ENCODE measurements at regions of chr9 and their contacts with region 1.

Region 1: GRCh38 chr9:2132484-2133082 is 117.4 kb downstream of the SMARCA2 start:
- DNase-seq: peak in 3 of 9 donors; percentile 12 to 19 (median 13)
- ATAC-seq: no peak
- H3K4me3 ChIP-seq: no peak overlapping the region
- H3K4me3 Mint-ChIP-seq: peak overlapping the region in 1 of 10 donors; percentile 26
- H3K27ac ChIP-seq: no peak overlapping the region
- H3K27ac Mint-ChIP-seq: peak overlapping the region in 2 of 9 donors; percentile 9 to 59
- H3K4me1 ChIP-seq: no peaks in the 10 kb centered on the region
- H3K4me1 Mint-ChIP-seq: peaks cover 8 to 64% (median 55%) of the 10 kb centered on the region in 7 donors
- H3K27me3 ChIP-seq: no peaks in the 10 kb centered on the region
- H3K27me3 Mint-ChIP-seq: no peaks in the 10 kb centered on the region

Region 2: GRCh38 chr9:1722404-1722803 is 410.2 kb before region 1 on chr9:
- CTCF ChIA-PET with region 1: no interaction called
- POLR2A ChIA-PET with region 1: no interaction called
- intact Hi-C with region 1: no loop called
- DNase-seq: no peak
- ATAC-seq: no peak
- H3K4me3 ChIP-seq: no peak overlapping the region
- H3K4me3 Mint-ChIP-seq: no peak overlapping the region
- H3K27ac ChIP-seq: no peak overlapping the region
- H3K27ac Mint-ChIP-seq: no peak overlapping the region
- H3K4me1 ChIP-seq: no peaks in the 10 kb centered on the region
- H3K4me1 Mint-ChIP-seq: no peaks in the 10 kb centered on the region
- H3K27me3 ChIP-seq: no peaks in the 10 kb centered on the region
- H3K27me3 Mint-ChIP-seq: peaks cover 0 to 33% (median 27%) of the 10 kb centered on the region in 5 donors

Region 3: DNA sequence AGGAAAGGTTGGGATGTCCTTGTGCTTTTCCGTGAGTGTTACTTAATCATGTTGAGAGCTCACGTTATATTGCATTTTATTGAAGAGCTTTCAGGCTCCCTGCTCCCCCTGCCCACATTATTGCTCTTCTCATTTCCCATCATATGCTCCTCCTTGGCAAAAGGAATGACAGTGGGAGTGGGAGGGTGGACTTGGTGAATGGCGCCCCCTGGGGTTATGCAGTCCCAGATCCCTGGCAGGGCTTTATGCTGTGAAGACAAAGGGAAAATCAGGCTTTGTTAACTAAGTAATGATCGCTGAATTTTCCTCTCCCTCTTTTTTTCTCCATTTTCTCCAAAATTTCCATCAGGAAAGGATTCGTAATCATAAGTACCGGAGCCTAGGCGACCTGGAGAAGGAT is 49.2 kb after region 1 on chr9:
- CTCF ChIA-PET with region 1: interaction called, 3 read pairs
- POLR2A ChIA-PET with region 1: interaction called, 6 read pairs
- intact Hi-C with region 1: loop called (anchors 2 kb)
- DNase-seq: no peak
- ATAC-seq: no peak
- H3K4me3 ChIP-seq: no peak overlapping the region
- H3K4me3 Mint-ChIP-seq: no peak overlapping the region
- H3K27ac ChIP-seq: no peak overlapping the region
- H3K27ac Mint-ChIP-seq: peak overlapping the region in 2 of 9 donors; percentile 14 to 22
- H3K4me1 ChIP-seq: no peaks in the 10 kb centered on the region
- H3K4me1 Mint-ChIP-seq: peaks cover 0 to 7% (median 4%) of the 10 kb centered on the region in 7 donors
- H3K27me3 ChIP-seq: no peaks in the 10 kb centered on the region
- H3K27me3 Mint-ChIP-seq: no peaks in the 10 kb centered on the region

Region 4: DNA sequence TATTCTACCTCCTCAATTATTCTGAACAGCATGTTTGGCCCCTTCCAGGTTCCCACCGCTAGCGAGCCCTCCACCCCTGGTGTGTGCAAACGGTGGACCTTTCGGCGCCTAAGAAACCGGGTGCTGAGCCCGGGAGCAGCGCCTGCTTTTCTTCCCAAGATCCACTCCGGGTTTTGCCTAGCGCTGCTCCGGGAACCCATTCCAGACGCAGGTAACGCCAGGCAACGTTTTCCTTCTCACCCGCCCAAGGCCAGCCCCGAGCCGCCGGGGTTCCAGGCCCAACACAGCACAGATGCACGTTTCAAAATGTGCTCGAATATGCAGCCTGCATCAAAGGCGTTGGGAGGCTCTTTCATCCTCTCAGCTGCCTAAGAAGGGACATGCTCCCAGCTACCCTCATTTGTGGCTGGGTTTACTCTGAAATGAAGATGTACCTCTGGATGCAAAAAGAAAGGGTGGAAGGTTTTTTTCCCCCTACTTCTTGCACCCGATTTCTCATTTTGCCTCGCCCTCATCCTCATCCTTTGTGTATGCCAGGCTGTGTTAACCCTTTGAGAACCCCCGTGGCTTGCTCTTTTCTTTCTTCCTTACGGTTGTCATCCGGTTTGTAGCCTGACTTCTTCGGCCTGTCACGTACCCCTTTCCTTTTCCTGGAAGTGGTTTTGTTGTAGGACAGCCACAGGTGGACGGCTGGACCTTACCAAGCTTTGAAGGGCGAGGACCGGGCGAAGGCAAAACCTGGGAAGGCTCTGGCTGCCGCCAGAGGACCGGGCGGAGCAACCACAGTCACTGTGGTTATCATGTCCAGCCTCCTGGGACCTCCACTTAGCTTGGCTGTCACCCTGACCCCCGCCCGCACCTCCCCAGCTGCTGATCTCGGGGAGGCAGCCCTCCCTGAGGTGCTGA is 109.5 kb after region 1 on chr9:
- CTCF ChIA-PET with region 1: no interaction called
- POLR2A ChIA-PET with region 1: no interaction called
- intact Hi-C with region 1: no loop called
- DNase-seq: peak; percentile 20 to 77 (median 48)
- ATAC-seq: peak; percentile 89
- H3K4me3 ChIP-seq: peak overlapping the region; percentile 43
- H3K4me3 Mint-ChIP-seq: peak overlapping the region; percentile 69 to 90 (median 80)
- H3K27ac ChIP-seq: no peak overlapping the region
- H3K27ac Mint-ChIP-seq: peak overlapping the region in 4 of 9 donors; percentile 17 to 50 (median 31)
- H3K4me1 ChIP-seq: no peaks in the 10 kb centered on the region
- H3K4me1 Mint-ChIP-seq: peaks cover 10 to 17% (median 17%) of the 10 kb centered on the region in 7 donors
- H3K27me3 ChIP-seq: peaks cover 0 to 4% of the 10 kb centered on the region in 2 donors
- H3K27me3 Mint-ChIP-seq: peaks cover 13 to 31% (median 24%) of the 10 kb centered on the region in 5 donors

Region 5: GRCh38 chr9:2459756-2460155 is 327.2 kb after region 1 on chr9:
- CTCF ChIA-PET with region 1: no interaction called
- POLR2A ChIA-PET with region 1: no interaction called
- intact Hi-C with region 1: no loop called
- DNase-seq: no peak
- ATAC-seq: no peak
- H3K4me3 ChIP-seq: no peak overlapping the region
- H3K4me3 Mint-ChIP-seq: no peak overlapping the region
- H3K27ac ChIP-seq: no peak overlapping the region
- H3K27ac Mint-ChIP-seq: peak overlapping the region in 1 of 9 donors; percentile 16
- H3K4me1 ChIP-seq: no peaks in the 10 kb centered on the region
- H3K4me1 Mint-ChIP-seq: no peaks in the 10 kb centered on the region
- H3K27me3 ChIP-seq: no peaks in the 10 kb centered on the region
- H3K27me3 Mint-ChIP-seq: peaks cover 5 to 19% (median 7%) of the 10 kb centered on the region in 5 donors

Region 6: DNA sequence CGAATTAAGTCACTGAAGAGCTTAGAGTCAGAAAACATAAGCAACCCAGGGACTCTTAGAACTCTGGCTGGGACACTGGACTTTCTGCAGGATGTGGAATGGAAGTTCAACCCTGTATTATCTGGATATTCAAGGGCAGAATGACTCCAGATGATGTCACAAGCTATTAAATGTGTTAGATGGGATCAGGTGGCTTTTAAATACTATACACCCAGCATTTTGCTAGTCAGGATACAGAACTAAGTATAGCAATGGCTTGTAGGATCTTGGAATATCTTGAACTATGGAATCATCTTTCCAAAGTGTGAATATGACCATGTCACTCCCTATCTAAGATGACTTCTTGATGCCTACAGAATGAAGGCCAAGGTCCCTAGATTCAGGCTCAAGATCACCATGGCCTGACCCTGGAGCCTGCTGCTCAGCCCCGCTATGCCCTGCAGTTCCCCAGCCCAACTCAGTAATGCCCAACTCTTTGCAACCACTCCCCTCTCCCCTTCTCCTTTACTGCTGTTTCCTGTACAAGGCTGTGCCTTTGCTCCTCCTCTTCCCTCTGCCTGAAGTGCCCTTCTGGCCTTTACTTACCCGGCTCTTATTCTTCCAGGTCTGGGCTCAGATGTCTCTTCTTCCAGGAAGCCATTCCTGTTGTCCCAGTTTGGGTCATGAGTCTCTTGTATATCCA is 531.9 kb after region 1 on chr9:
- CTCF ChIA-PET with region 1: no interaction called
- POLR2A ChIA-PET with region 1: no interaction called
- intact Hi-C with region 1: no loop called
- DNase-seq: no peak
- ATAC-seq: no peak
- H3K4me3 ChIP-seq: no peak overlapping the region
- H3K4me3 Mint-ChIP-seq: no peak overlapping the region
- H3K27ac ChIP-seq: no peak overlapping the region
- H3K27ac Mint-ChIP-seq: no peak overlapping the region
- H3K4me1 ChIP-seq: no peaks in the 10 kb centered on the region
- H3K4me1 Mint-ChIP-seq: peaks cover 0 to 11% (median 0%) of the 10 kb centered on the region in 7 donors
- H3K27me3 ChIP-seq: no peaks in the 10 kb centered on the region
- H3K27me3 Mint-ChIP-seq: no peaks in the 10 kb centered on the region

Region 7: GRCh38 chr9:2837915-2838314 is 705.3 kb after region 1 on chr9:
- CTCF ChIA-PET with region 1: no interaction called
- POLR2A ChIA-PET with region 1: no interaction called
- intact Hi-C with region 1: loop called in 1 of 2 experiments (anchors 5 kb)
- DNase-seq: no peak
- ATAC-seq: no peak
- H3K4me3 ChIP-seq: no peak overlapping the region
- H3K4me3 Mint-ChIP-seq: no peak overlapping the region
- H3K27ac ChIP-seq: no peak overlapping the region
- H3K27ac Mint-ChIP-seq: peak overlapping the region in 2 of 9 donors; percentile 37 to 69
- H3K4me1 ChIP-seq: peaks cover 8 to 12% of the 10 kb centered on the region in 2 donors
- H3K4me1 Mint-ChIP-seq: peaks cover 9 to 27% (median 18%) of the 10 kb centered on the region in 7 donors
- H3K27me3 ChIP-seq: no peaks in the 10 kb centered on the region
- H3K27me3 Mint-ChIP-seq: no peaks in the 10 kb centered on the region

Measured in naive thymus-derived CD4-positive, alpha-beta T cell (primary cell).